Tibial artery (tissue), 4 donors: ENCODE measurements at regions of chr1 and their contacts with region 1.

Region 1: DNA sequence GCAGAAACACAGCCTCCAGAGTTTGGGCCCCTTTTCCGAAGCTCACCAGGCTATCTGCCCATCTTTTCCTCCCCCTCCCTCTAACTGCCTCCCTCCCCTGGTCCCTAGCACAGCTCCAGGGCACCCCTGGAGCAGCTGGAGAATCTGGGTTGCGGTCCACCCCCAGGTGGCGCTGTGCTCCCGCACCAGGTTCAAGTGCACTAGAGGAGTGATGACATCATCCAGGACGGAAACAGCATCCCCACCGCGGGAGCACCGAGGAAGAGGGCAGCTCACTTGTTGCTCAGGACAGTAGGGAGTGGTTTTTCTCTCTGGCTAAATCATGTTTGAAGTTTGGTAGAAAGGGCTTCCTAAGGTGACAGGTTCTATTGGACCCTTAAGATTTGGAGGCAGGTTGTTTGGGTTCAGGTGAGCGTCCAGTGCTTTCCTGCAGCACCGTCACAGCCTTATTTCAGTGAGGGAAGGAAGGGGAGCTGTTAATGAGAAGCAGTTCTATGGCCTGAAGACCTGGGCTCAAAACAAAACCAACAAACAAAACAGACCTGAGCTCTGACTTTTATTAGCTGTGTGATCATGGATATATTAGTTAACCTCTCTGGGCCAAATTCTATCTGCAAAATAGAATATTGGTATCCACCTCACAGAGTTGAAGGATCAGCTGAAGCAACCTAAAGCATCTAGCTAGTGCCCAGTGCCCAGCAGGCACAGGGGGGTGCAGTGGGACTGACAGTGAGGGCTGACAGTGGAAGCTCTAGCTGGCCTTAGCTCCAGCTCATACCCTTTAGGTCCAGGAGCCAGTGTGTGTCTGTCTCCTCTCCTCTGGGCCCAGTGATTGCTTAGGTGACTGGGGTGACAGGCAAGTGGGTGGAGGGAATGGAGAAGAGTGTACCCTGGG is 7.5 kb downstream of the SHISA4 start:
- DNase-seq: peak; percentile 92 to 96
- H3K4me3 ChIP-seq: no peak overlapping the region
- H3K27ac ChIP-seq: peak overlapping the region; percentile 76 to 95
- H3K4me1 ChIP-seq: peaks cover 0 to 98% (median 78%) of the 10 kb centered on the region in 4 donors
- H3K27me3 ChIP-seq: no peaks in the 10 kb centered on the region
- CTCF ChIP-seq: peak; percentile 95 to 99

Region 2: GRCh38 chr1:201941420-201942128 is 45.4 kb after region 1 on chr1:
- intact Hi-C with region 1: loop called (anchors 5 kb)
- DNase-seq: no peak
- H3K4me3 ChIP-seq: peak overlapping the region; percentile 83 to 92
- H3K27ac ChIP-seq: peak overlapping the region; percentile 95 to 97
- H3K4me1 ChIP-seq: peaks cover 0 to 50% (median 28%) of the 10 kb centered on the region in 4 donors
- H3K27me3 ChIP-seq: no peaks in the 10 kb centered on the region
- CTCF ChIP-seq: no peak

Region 3: DNA sequence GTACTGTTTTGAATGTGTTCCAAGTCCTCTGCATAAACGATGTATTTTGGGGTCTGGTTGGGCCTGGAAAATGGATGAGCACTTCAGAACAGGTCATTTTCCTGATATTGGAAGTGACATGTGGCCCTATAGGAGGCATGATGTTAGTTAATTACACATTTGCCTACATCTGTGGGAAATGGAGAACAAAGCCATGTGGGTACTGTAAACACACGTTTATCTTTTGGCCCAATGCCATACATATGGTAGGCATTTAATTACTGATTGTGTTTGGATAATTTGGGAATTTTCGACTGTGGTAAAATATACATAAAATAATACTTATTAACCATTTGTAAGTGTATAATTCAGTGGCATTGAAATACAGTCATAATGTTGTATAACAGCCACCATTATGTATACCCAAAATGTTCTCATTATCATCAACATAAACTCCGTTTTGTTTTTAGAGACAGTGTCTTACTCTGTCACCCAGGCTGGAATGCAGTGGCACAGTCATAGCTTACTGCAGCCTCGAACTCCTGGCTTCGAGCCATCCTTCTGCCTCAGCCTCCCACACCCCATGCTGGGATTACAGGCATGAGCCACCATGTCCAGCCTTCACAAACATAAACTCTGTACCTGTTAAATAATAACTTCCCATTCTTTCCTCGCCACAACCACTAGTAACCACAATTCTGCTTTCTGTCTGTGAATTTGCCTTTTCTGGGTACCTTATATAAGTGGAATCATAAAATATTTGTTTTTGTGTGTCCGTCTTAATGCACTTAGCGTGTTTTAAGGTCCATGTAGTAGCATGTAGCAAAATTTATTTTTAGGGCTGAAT is 74.4 kb after region 1 on chr1:
- intact Hi-C with region 1: loop called (anchors 5 kb)
- DNase-seq: no peak
- H3K4me3 ChIP-seq: no peak overlapping the region
- H3K27ac ChIP-seq: no peak overlapping the region
- H3K4me1 ChIP-seq: peaks cover 0 to 19% (median 6%) of the 10 kb centered on the region in 4 donors
- H3K27me3 ChIP-seq: no peaks in the 10 kb centered on the region
- CTCF ChIP-seq: no peak